ENCODE measurements at regions of chr5 and their contacts with region 1.

Region 1: DNA sequence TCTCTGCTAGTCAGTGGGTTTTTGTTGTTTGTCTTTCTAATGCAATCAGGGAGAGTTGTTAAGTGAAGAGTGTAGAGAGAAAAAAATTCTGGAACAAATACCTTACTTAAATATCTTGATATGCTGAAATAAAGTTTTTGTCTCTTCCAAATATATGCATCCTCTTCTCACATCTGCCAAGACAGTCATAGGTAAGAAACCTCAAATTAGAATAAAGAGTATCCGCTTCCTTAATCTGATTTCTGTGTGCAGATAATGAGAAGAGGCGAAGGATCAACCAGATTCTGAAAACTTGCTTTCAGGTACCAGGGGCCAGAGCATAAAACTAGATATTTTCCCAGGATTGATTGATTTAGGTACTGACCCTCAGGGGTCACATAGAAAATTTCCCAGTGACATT is 11.3 kb upstream of the IL6ST start:
- DNase-seq: no peak
- ATAC-seq: peak; percentile 91
- H3K4me3 ChIP-seq: no peak overlapping the region
- H3K27ac ChIP-seq: no peak overlapping the region
- H3K4me1 ChIP-seq: peaks cover 6% of the 10 kb centered on the region; the same call in 1 of the 2 replicates
- H3K27me3 ChIP-seq: no peaks in the 10 kb centered on the region
- CTCF ChIP-seq: no peak
- EP300 ChIP-seq: no peak
- POLR2A ChIP-seq: no peak
- RAD21 ChIP-seq: no peak

Region 2: DNA sequence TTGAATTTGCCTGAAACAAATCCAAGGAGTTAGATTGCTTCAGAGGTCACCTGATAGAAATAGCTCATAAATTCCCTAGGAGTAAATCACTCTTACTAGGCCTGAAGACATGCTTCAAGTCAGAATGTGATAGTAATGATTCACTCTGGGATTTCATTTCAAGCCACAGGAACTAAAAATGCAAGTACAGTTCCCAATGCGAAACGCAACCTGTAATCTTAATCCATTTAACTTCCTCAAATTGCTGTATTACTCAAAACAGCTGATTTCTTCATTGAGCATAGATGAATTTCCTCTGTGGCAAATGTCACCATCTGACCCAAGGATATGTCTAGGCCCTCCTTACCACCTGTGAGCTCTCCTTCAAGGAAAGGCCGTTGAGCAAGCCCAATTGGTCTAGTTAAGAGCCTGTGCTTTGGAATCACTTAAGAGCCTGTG is 20.8 kb after region 1 on chr5:
- CTCF ChIA-PET with region 1: interaction called, 4 read pairs
- POLR2A ChIA-PET with region 1: interaction called, 5 read pairs
- RAD21 ChIA-PET with region 1: interaction called, 3 read pairs
- SMC1A ChIA-PET with region 1: interaction called, 17 read pairs
- in situ Hi-C with region 1: no loop called
- intact Hi-C with region 1: no loop called
- DNase-seq: peak; percentile 89
- ATAC-seq: peak; percentile 83
- H3K4me3 ChIP-seq: no peak overlapping the region
- H3K27ac ChIP-seq: no peak overlapping the region
- H3K4me1 ChIP-seq: peaks cover 19% of the 10 kb centered on the region
- H3K27me3 ChIP-seq: no peaks in the 10 kb centered on the region
- CTCF ChIP-seq: no peak
- EP300 ChIP-seq: peak; percentile 89 to 96
- POLR2A ChIP-seq: no peak
- RAD21 ChIP-seq: no peak

Measured in GM12878 (cell line).